ENCODE measurements at regions of chr9 and their contacts with region 1.

Region 1: DNA sequence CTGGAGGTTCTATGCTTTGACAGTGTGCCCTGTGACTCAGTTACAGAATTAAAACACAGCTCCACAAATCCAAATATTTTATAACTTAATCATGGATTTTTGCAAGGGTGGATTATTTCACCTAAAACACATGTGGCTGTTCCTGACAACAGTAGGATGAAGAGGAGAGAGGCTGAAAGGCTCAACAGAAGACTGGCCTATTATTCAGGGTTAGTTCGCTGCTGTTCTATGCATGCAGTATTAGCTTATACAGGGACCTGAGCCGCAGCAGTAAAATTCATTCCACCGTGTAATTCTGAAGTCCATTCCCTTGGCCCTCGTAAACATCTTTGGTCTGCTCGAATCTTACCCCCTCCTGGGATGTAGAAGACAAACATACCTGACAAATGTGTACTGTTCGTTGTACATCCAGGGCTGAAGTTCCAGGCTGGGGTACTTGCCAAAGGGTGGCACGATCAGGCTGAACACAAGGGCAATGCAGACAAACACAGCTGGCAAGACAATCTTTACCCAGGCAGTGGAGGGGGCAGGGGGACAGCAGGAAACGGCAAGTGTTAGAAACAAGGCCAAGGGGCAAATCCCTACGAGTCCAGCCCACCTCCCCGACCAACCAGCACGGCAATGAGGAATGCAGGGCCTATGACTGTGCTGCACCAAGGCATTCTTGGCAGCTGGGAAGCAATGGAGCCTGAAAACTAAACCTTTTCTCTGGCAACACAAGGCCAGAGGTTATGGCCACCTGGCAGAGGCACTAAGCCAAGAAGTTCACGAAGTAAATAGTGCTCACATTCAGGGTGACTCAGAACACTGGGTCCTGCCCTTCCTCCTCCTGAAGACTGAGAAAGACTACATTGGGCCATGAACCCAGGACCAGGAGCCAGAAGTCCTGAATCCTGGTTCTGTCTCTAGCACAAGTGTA is 46.8 kb downstream of the NIPSNAP3B start:
- DNase-seq: peak; percentile 90
- ATAC-seq: peak; percentile 90
- H3K4me3 ChIP-seq: peak overlapping the region; percentile 35
- H3K27ac ChIP-seq: peak overlapping the region; percentile 83
- H3K4me1 ChIP-seq: peaks cover 20% of the 10 kb centered on the region
- H3K27me3 ChIP-seq: no peaks in the 10 kb centered on the region
- CTCF ChIP-seq: no peak

Region 2: DNA sequence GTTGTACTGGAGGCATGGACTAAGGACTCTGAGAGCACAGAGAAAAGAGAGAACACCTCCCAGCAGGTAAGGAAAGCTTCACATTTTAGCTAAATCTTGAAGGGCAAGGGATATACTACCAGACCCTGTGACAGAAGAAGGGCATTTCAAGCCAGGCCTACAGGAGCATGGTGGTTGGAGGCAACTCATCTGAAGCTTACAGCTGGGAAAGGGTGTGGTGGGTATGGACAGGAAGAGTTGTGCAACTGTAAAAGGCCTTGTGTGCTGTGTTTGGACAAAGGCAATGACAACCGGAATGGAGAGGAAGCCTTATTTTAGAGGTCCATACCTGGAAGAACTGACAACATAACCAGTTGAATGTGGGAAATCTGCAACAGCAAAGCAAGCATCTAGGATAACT is 15.6 kb before region 1 on chr9:
- CTCF ChIA-PET with region 1: no interaction called
- POLR2A ChIA-PET with region 1: no interaction called
- intact Hi-C with region 1: loop called (anchors 2 kb)
- DNase-seq: no peak
- ATAC-seq: no peak
- H3K4me3 ChIP-seq: no peak overlapping the region
- H3K27ac ChIP-seq: no peak overlapping the region
- H3K4me1 ChIP-seq: peaks cover 25% of the 10 kb centered on the region
- H3K27me3 ChIP-seq: no peaks in the 10 kb centered on the region
- CTCF ChIP-seq: no peak

Measured in PC-3 (cell line).